ENCODE measurements at regions of chr7 and their contacts with region 1.

Region 1: DNA sequence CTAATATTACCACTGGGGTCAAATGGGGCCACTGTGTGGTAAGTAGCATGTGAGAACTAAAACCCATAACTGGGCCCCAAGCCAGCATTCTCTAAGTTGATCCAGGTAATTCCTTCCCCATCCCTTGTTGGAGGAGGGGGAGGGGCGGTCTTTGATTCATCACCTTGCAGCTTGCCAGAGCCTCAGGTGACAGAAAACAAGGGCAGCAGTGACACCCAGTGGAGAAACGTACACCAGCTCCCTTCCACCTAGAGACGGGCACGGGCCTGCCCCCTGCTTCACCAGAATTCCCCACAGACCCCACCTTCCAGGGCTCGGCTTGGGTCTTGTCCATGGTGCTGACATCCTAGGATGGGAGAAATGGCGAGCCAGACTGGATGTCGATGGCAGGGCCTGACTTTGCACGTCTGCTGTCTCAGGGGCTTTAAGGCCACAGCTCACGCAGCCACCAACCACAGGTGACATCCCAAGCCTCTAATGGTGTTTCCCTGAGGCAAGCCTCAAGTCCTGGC is 102.0 kb downstream of the STRA8 start:
- DNase-seq: peak; percentile 68
- H3K4me3 Mint-ChIP-seq: no peak overlapping the region
- H3K27ac Mint-ChIP-seq: no peak overlapping the region
- H3K4me1 Mint-ChIP-seq: peaks cover 2% of the 10 kb centered on the region
- H3K27me3 Mint-ChIP-seq: no peaks in the 10 kb centered on the region

Region 2: GRCh38 chr7:135274495-135275268 is 61.0 kb before region 1 on chr7:
- intact Hi-C with region 1: loop called (anchors 5 kb)
- DNase-seq: peak; percentile 93
- H3K4me3 Mint-ChIP-seq: no peak overlapping the region
- H3K27ac Mint-ChIP-seq: no peak overlapping the region
- H3K4me1 Mint-ChIP-seq: peaks cover 3% of the 10 kb centered on the region
- H3K27me3 Mint-ChIP-seq: peaks cover 7% of the 10 kb centered on the region

Region 3: GRCh38 chr7:135281363-135281949 is 54.2 kb before region 1 on chr7:
- intact Hi-C with region 1: loop called (anchors 2 kb)
- DNase-seq: peak; percentile 93
- H3K4me3 Mint-ChIP-seq: no peak overlapping the region
- H3K27ac Mint-ChIP-seq: no peak overlapping the region
- H3K4me1 Mint-ChIP-seq: peaks cover 13% of the 10 kb centered on the region
- H3K27me3 Mint-ChIP-seq: peaks cover 10% of the 10 kb centered on the region

Region 4: DNA sequence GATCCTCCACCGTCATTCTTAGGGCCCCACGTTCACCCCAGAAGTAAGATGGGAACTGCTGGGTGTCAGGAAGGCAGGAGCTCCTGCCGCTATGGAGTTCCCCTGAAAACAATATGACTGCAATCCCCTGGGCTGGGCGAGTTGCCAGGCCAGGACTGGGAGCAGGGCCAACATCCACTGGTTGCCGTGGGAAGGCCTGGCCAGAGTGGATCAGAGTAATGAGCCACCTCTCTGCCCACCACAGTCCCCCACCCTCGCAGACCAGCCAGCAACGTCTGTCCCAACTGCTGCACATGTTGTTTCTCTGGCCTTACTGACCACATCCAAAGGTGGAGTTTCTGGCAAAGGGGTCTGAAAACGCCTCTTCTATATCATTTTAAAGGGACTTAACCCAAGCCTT is 15.4 kb before region 1 on chr7:
- intact Hi-C with region 1: no loop called
- DNase-seq: no peak
- H3K4me3 Mint-ChIP-seq: no peak overlapping the region
- H3K27ac Mint-ChIP-seq: no peak overlapping the region
- H3K4me1 Mint-ChIP-seq: no peaks in the 10 kb centered on the region
- H3K27me3 Mint-ChIP-seq: no peaks in the 10 kb centered on the region

Region 5: DNA sequence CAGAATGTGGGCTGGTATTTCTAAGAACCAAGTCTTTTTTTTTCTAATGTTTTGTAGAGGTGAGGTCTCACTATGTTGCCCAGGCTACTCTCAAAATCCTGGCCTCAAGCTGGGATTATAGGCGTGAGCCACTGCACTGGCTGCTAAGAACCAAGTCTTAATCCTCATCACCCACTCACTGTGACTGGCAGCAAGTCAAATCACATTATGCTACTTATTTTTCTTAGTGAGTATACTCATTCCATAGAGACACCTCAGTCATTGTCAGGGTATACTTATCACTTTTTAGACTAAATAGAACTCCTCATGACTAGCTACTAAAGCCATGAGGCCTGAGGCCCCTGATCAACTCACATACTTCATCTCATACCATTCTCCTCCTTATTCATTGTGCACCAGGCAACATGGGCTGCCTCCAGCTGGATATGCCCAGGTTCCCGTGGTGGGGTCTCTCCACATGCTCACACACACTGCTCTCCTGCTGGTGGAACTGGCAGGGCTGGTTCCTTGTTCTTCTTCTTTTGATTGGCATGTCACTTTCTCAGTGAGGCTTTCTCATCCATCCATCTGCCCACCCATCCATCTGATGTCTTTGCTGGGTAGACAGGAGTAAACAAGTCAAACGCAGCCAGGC is 14.2 kb after region 1 on chr7:
- intact Hi-C with region 1: no loop called
- DNase-seq: no peak
- H3K4me3 Mint-ChIP-seq: no peak overlapping the region
- H3K27ac Mint-ChIP-seq: no peak overlapping the region
- H3K4me1 Mint-ChIP-seq: no peaks in the 10 kb centered on the region
- H3K27me3 Mint-ChIP-seq: peaks cover 2% of the 10 kb centered on the region

Measured in activated CD4-positive, alpha-beta T cell treated with anti-CD3 and anti-CD28 coated beads, Interleukin-2, amount 10 ng/mL, durations not matched to agents 24 days and 14 days (primary cell).